ENCODE measurements at regions of chr7 and their contacts with region 1.

Region 1: DNA sequence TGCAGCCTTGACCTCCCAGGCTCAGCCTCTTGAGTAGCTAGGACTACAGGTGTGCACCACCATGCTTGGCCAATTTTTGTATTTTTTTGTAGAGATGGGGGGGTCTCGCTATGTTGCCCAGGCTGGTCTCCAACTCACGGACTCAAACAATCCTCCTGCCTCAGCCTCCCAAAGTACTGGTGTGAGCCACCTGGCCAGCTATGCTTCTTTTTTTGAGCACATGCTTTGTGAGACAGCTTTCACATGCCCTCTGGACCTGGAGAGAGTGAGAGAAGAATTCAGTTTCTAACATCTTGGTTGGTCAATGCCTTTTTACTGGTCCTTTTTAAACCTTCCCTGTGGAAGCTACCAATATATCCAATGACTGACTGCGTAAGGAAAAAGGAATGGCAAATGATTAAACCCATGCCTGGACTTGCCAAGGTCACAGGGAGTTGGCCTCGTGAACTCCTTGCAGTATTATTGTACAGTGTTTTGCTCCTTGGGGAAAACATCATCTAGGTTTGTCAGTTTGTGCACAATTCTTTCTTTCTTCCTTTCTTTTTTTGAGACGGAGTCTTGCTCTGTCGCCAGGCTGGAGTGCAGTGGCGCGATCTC is 6.2 kb upstream of the FOXK1 start:
- DNase-seq: no peak
- ATAC-seq: peak; percentile 50; the same call in 1 of the 3 replicates
- H3K4me3 ChIP-seq: no peak overlapping the region
- H3K27ac ChIP-seq: no peak overlapping the region
- H3K4me1 ChIP-seq: peaks cover 15% of the 10 kb centered on the region
- H3K27me3 ChIP-seq: no peaks in the 10 kb centered on the region; a peak in 1 of 5 replicates
- CTCF ChIP-seq: no peak
- EP300 ChIP-seq: no peak
- POLR2A ChIP-seq: no peak
- RAD21 ChIP-seq: no peak

Region 2: DNA sequence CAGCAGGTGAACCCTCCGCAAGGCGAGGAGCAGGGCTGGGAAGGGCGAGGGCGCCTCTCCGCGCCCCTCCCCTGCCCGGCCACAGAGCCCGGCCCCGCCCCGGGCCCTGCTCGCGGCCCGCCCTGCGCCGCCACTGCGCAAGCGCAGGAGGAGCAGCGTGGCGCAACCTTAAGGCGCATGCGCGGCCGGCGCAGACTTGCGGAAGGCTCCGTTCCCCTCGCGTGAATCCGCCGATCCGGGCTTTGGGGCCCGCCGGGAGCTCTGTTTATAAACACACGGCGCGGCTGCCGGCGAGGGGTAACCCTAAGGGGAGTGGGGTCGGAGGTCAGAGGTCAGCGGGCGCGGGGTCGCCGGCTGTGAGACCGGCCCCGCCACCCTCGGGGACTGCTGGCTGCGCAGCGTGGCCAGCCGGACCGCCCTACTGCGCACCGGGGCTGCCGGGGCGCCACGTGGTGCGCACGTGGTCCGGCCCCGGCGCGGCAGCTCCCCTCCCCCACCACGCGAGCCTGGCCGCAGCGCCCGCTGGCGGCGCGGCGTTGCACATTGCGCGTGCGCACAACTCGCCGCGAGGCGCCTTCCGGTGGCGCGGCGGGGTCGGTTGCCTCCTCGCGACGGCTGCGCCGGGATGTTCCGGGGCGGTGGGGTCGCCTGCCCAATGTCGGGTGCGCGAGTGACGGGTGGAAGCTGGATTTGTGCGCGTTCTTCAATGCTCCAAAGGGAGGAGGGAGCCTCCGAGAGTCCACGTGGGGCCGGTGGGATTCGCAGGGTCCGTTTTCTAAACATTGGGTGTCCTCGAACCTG is 34.0 kb before region 1 on chr7:
- CTCF ChIA-PET with region 1: no interaction called
- POLR2A ChIA-PET with region 1: interaction called, 12 read pairs
- in situ Hi-C with region 1: loop called (anchors 5 kb)
- intact Hi-C with region 1: no loop called
- DNase-seq: peak; percentile 86
- ATAC-seq: peak; percentile 90
- H3K4me3 ChIP-seq: peak overlapping the region; percentile 49 to 79 (median 58); a peak in 5 of 6 replicates
- H3K27ac ChIP-seq: peak overlapping the region; percentile 81
- H3K4me1 ChIP-seq: peaks cover 22% of the 10 kb centered on the region
- H3K27me3 ChIP-seq: no peaks in the 10 kb centered on the region
- CTCF ChIP-seq: peak; percentile 69
- EP300 ChIP-seq: no peak; a peak in 1 of 4 replicates
- POLR2A ChIP-seq: peak; percentile 61 to 86
- RAD21 ChIP-seq: peak; percentile 86

Measured in HepG2 (cell line).